ENCODE measurements at regions of chr15 and their contacts with region 1.

Region 1: DNA sequence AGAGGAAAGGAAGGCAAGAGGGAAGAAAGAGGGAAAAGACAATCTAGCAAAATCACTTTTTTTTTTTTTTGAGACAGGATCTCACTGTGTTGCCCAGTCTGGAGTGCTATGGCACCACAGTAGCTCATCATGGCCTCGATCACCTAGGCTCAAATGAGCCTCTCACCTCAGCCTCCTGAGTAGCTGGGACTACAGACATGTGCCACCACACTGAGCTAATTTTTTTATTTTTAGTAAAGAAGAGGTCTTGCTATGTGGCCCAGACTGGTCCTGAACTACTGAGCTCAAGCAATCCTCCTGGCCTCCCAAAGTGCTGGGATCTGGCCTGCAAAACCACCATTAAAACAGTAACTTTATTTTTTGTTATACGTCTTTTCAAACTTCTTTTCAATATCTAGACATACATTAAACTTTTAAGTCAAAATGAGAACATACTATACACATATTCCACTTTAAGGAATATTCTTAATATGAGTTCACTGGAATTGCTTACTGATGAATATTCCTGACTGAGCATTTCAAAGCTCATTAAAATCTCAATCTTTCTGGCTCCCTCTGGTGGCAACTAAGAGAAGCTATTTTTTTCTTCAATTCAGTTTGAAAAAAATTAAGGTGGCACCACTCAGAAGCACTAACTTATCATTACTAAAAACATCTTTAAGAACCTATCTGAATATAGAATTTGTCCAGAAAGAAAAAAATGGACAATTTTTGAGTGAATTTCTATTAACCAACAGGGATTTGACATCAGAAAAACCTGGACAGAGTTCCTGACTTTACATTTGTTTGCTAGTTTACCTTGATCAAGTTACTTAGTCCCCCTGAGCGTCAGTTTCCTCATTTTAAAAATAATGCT is 40.9 kb downstream of the UACA start:
- H3K4me3 Mint-ChIP-seq: no peak overlapping the region
- H3K27ac Mint-ChIP-seq: no peak overlapping the region
- H3K4me1 Mint-ChIP-seq: peaks cover 12% of the 10 kb centered on the region
- H3K27me3 Mint-ChIP-seq: no peaks in the 10 kb centered on the region

Region 2: DNA sequence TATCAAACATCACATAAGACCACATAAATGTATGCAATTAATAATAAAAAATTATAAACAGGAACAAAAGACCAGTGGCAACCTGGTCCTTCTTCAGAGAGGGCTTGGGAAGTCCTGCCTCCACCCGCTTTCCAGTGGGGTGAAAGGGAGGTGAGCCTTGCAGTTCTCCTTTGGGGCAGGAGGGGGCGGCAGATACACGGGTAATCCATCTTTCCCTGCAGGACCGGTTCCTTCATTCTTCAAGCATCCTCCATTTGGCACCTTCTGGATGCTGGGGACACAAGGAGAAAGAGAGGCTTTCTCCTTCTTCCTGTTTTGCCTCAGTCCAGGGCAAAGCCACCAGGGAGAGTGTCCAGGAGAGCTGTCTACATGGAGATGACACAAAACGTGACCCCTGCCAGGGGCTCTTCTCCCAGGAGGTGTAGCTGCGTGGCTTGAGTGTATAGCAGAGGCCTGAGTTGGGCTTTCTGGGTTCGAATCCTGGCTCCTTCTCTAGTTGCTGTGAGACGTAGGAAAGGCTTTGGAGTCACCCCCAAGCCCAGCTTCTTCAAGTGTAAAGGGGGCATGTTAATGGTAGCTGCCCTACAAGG is 1246.6 kb before region 1 on chr15:
- intact Hi-C with region 1: loop called (anchors 10 kb)
- H3K4me3 Mint-ChIP-seq: no peak overlapping the region
- H3K27ac Mint-ChIP-seq: no peak overlapping the region
- H3K4me1 Mint-ChIP-seq: peaks cover 2% of the 10 kb centered on the region
- H3K27me3 Mint-ChIP-seq: peaks cover 21% of the 10 kb centered on the region

Region 3: DNA sequence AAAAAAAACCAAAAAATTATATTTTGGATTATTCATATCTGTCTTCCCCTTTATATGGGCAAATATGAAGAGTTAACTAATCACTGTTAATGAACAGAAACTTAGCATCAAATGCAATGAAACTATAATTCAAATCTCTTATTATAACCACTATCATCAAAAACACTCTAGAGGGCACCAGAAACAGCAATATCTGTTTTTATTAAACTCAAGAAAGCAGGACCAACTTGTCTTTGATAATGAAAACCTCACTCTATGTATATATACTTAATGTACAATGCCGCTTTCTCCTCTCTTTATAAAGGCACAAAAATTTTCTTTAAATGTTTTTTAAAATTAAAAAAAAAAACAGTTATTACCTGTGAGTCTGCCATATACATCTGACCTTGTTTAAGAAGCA is 51.8 kb before region 1 on chr15:
- intact Hi-C with region 1: loop called (anchors 10 kb)
- H3K4me3 Mint-ChIP-seq: no peak overlapping the region
- H3K27ac Mint-ChIP-seq: no peak overlapping the region
- H3K4me1 Mint-ChIP-seq: peaks cover 7% of the 10 kb centered on the region
- H3K27me3 Mint-ChIP-seq: peaks cover 2% of the 10 kb centered on the region

Region 4: GRCh38 chr15:70902107-70902506 is 179.6 kb after region 1 on chr15:
- intact Hi-C with region 1: no loop called
- H3K4me3 Mint-ChIP-seq: no peak overlapping the region
- H3K27ac Mint-ChIP-seq: no peak overlapping the region
- H3K4me1 Mint-ChIP-seq: no peaks in the 10 kb centered on the region
- H3K27me3 Mint-ChIP-seq: no peaks in the 10 kb centered on the region

Region 5: DNA sequence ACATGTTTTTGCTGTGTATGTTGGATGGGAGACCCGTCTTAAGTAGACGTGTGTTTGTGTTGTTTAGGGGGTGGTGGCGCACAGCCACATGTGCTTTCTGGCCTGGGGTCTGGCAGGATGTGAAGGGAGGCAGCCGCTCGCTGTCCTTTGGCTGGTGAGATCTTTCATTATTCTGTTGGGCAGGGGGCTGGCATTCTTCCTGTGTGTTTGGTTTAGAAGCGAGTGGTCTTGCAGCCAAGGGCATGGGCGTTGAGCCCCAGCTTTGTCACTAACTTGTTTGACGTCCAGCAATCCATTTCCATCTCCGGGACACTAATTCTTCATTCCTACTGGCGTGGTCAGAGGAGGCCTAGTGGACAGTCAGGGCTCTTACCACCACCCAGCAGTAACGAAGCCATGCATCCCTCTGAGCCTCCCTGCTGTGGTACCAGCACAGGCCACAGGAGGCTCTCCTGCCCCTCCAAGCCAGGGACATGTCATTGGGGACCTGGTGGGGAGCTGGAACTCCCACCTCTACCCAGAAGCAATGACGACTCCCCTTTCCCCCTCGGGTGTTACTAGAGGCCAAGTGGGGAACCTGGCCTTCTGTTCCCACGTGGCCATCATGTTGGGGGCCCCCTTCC is 403.4 kb after region 1 on chr15:
- intact Hi-C with region 1: no loop called
- H3K4me3 Mint-ChIP-seq: no peak overlapping the region
- H3K27ac Mint-ChIP-seq: no peak overlapping the region
- H3K4me1 Mint-ChIP-seq: no peaks in the 10 kb centered on the region
- H3K27me3 Mint-ChIP-seq: peaks cover 18% of the 10 kb centered on the region

Measured in dendritic cell treated with granulocyte-macrophage colony-stimulating factor and Interleukin-4, amounts not matched to agents 40 ng/mL and 50 ng/mL, for 4 days (primary cell).